MCF 10A (cell line): ENCODE measurements at regions of chr5 and their contacts with region 1.

Region 1: GRCh38 chr5:149114403-149115312 is 26.6 kb upstream of the ABLIM3 start:
- DNase-seq: peak; percentile 93
- H3K4me3 Mint-ChIP-seq: no peak overlapping the region
- H3K27ac Mint-ChIP-seq: peak overlapping the region; percentile 65
- H3K4me1 Mint-ChIP-seq: peaks cover 45% of the 10 kb centered on the region
- H3K27me3 Mint-ChIP-seq: no peaks in the 10 kb centered on the region
- CTCF ChIP-seq: peak; percentile 97

Region 2: DNA sequence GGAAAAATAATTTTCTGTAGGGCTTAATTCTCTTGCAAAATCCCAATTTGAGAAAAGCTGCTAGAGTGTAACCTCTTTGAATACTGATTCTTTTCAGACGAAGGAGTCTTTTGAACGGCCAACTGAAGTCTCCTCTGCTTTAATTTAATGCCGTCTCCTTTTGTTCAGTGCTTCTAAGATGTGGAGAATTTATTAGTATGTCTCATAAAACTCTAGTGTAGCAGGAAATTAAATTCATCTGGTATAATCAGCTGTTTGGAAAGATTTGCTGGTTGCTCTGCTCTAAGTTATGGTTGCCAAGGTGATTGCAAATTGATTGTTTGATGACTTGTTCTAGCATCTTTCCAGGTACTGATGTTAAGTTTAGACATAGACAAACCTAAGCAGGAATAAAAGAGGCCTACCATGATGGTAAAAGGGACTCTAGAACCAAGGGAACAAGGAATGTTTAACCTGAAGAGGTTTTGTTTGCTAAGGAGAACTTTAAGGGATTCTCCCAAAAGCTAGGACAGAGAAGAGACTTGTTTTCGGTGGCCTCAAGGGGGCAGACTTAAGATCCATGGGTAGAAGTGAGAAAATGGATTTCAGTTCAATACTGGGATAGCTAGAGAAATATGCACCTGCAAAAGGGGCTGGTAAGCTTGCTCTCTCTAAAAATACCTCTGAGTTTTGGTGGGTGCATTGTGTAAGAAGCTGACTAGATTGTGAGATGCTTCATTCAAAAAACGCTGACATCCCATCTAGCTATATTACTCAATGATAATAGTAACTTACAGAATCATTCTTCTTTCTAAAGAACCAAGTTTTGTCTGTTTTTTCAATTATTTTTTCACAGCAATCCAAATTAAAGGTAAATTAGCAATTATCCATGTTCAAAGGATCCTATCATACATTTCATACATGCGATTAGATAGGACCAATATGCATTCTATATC is 293.9 kb before region 1 on chr5:
- CTCF ChIA-PET with region 1: interaction called, 16 read pairs
- POLR2A ChIA-PET with region 1: interaction called, 6 read pairs
- intact Hi-C with region 1: loop called (anchors 2 kb)
- DNase-seq: peak; percentile 63
- H3K4me3 Mint-ChIP-seq: no peak overlapping the region
- H3K27ac Mint-ChIP-seq: no peak overlapping the region
- H3K4me1 Mint-ChIP-seq: peaks cover 5% of the 10 kb centered on the region
- H3K27me3 Mint-ChIP-seq: no peaks in the 10 kb centered on the region
- CTCF ChIP-seq: peak; percentile 84

Region 3: GRCh38 chr5:148957591-148958202 is 157.0 kb before region 1 on chr5:
- CTCF ChIA-PET with region 1: interaction called, 18 read pairs
- POLR2A ChIA-PET with region 1: no interaction called
- intact Hi-C with region 1: loop called (anchors 1 kb)
- DNase-seq: peak; percentile 71
- H3K4me3 Mint-ChIP-seq: no peak overlapping the region
- H3K27ac Mint-ChIP-seq: no peak overlapping the region
- H3K4me1 Mint-ChIP-seq: peaks cover 24% of the 10 kb centered on the region
- H3K27me3 Mint-ChIP-seq: no peaks in the 10 kb centered on the region
- CTCF ChIP-seq: peak; percentile 99

Region 4: GRCh38 chr5:148991606-148992005 is 123.1 kb before region 1 on chr5:
- CTCF ChIA-PET with region 1: interaction called, 18 read pairs
- POLR2A ChIA-PET with region 1: interaction called, 7 read pairs
- intact Hi-C with region 1: no loop called
- DNase-seq: no peak
- H3K4me3 Mint-ChIP-seq: no peak overlapping the region
- H3K27ac Mint-ChIP-seq: no peak overlapping the region
- H3K4me1 Mint-ChIP-seq: peaks cover 42% of the 10 kb centered on the region
- H3K27me3 Mint-ChIP-seq: no peaks in the 10 kb centered on the region
- CTCF ChIP-seq: no peak

Region 5: GRCh38 chr5:149024477-149024876 is 90.2 kb before region 1 on chr5:
- CTCF ChIA-PET with region 1: interaction called, 28 read pairs
- POLR2A ChIA-PET with region 1: interaction called, 5 read pairs
- intact Hi-C with region 1: no loop called
- DNase-seq: peak; percentile 39
- H3K4me3 Mint-ChIP-seq: no peak overlapping the region
- H3K27ac Mint-ChIP-seq: no peak overlapping the region
- H3K4me1 Mint-ChIP-seq: peaks cover 16% of the 10 kb centered on the region
- H3K27me3 Mint-ChIP-seq: no peaks in the 10 kb centered on the region
- CTCF ChIP-seq: no peak

Region 6: DNA sequence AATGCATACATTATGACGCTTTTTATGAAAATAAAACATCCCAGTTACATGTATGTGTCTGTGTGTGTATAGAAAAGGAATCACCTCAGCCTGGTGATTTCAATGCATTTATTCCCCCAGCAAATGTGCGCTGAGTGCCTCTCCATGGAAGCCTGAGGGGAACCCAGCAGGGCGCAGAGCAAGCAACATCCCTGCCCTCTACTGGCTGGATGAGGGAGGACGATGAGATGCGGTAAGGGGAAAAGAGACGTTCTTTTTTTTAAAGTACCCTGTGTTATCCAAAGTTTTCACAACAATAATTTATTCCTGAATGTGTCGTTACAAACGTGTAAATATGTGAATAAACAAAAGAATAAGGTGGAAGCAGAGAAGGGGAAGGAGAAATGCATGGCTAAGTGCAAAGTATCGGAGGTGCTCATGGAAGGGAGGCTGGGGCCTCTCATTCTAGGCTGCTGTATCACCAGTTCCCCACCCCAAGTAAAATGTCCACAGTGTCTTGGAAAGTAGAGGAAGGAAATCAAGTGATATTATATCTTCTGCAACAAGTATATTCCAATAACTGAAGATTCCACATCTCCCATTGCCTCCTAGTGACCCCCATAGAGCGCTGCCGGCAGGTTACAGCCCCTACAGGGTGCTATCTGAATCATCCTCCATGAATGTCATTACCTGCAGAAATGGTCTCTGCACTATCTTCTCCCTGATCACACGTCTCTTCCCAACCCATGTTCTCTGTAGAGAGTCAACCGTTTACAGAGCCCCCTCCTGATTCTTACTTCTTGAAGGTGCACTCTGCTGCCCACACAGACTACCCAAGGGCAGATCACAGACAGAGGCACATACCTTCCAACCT is 13.6 kb after region 1 on chr5:
- CTCF ChIA-PET with region 1: interaction called, 100 read pairs
- POLR2A ChIA-PET with region 1: interaction called, 23 read pairs
- intact Hi-C with region 1: no loop called
- DNase-seq: peak; percentile 80
- H3K4me3 Mint-ChIP-seq: peak overlapping the region; percentile 67
- H3K27ac Mint-ChIP-seq: peak overlapping the region; percentile 84
- H3K4me1 Mint-ChIP-seq: peaks cover 73% of the 10 kb centered on the region
- H3K27me3 Mint-ChIP-seq: no peaks in the 10 kb centered on the region
- CTCF ChIP-seq: peak; percentile 87

Region 7: DNA sequence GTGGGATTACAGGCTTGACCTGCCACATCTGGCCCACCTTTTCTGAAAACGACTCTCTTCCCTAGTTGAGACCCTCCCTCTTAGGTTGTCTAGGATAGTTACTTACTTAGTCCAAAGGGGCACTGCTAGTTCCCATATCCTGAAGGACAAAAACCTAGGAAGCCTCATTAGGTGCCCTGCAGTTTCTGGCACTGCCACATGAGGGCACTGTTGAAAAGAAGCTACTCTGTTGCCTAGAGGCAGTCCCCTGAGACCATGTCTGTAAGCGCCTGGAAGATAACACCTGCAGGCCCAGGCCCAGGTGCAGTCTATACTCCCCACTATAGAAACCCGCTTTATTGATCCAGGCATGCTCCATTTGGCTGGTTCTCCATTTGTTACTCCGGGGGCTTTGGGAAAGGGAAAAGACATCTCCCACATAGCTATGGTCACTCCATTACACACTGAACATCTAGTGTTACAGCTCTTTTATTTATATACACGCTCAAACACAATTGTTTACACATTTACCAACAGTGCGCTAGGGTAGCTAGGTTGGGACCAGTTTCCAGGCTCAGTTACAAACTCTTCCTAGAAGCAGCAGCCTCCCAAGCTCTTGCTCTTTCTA is 542.0 kb after region 1 on chr5:
- CTCF ChIA-PET with region 1: no interaction called
- POLR2A ChIA-PET with region 1: no interaction called
- intact Hi-C with region 1: no loop called
- DNase-seq: peak; percentile 80
- H3K4me3 Mint-ChIP-seq: no peak overlapping the region
- H3K27ac Mint-ChIP-seq: no peak overlapping the region
- H3K4me1 Mint-ChIP-seq: no peaks in the 10 kb centered on the region
- H3K27me3 Mint-ChIP-seq: peaks cover 21% of the 10 kb centered on the region
- CTCF ChIP-seq: peak; percentile 85